ENCODE measurements at regions of chr4 and their contacts with region 1.

Region 1: DNA sequence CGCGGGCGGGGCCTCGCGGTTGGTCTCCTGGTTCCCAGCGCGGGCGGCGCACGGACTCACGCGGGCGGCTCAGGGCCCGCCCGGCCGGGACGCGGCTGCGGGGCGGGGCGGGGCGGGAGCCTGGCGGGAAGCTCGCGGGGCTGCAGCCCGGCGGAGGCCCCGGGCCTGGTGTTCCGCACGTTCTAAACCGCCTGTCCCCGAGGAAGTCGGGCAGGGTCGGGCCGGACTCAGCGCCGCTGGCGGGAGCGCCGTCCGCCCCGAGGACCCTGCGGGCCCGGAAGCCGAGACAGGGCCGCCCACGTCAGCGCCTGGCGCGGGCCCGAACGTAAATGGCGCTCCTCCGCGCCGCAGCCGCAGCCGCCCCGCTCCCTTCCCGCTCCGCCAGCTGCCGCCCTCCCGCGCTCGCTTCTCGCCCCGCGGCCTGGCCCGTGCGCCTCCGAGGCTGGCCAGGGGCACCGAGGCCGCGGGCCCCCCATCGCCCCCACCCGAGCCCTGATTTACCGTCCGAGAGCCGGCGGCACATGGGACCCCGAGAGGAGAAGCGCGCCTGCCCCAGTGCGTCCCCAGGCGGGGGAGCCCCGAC is 309 bp upstream of the CTBP1 start:
- DNase-seq: peak; percentile 90
- ATAC-seq: peak; percentile 63
- H3K4me3 Mint-ChIP-seq: peak overlapping the region; percentile 80
- H3K27ac Mint-ChIP-seq: peak overlapping the region; percentile 94
- H3K4me1 Mint-ChIP-seq: peaks cover 74% of the 10 kb centered on the region
- H3K27me3 Mint-ChIP-seq: no peaks in the 10 kb centered on the region

Region 2: GRCh38 chr4:931960-932712 is 317.1 kb before region 1 on chr4 and contains the starts of genes GAK and TMEM175:
- CTCF ChIA-PET with region 1: no interaction called
- POLR2A ChIA-PET with region 1: no interaction called
- intact Hi-C with region 1: loop called in 1 of 2 experiments (anchors 1 kb)
- DNase-seq: peak; percentile 98
- ATAC-seq: peak; percentile 95
- H3K4me3 Mint-ChIP-seq: peak within 1 kb of the TSS; percentile 87
- H3K27ac Mint-ChIP-seq: peak within 1 kb of the TSS; percentile 89
- H3K4me1 Mint-ChIP-seq: peaks cover 29% of the 10 kb centered on the region
- H3K27me3 Mint-ChIP-seq: no peaks in the 10 kb centered on the region
- total RNA-seq, gene GAK: 82.9 to 88.0 TPM
- total RNA-seq, gene TMEM175: 15.2 to 17.3 TPM

Region 3: GRCh38 chr4:973431-974397 is 275.5 kb before region 1 on chr4 and contains the start of gene DGKQ:
- CTCF ChIA-PET with region 1: no interaction called
- POLR2A ChIA-PET with region 1: no interaction called
- intact Hi-C with region 1: loop called in 1 of 2 experiments (anchors 1 kb)
- DNase-seq: peak; percentile 93
- ATAC-seq: peak; percentile 96
- H3K4me3 Mint-ChIP-seq: peak within 1 kb of the TSS; percentile 58
- H3K27ac Mint-ChIP-seq: no peak within 1 kb of the TSS
- H3K4me1 Mint-ChIP-seq: peaks cover 6% of the 10 kb centered on the region
- H3K27me3 Mint-ChIP-seq: no peaks in the 10 kb centered on the region
- total RNA-seq, gene DGKQ: 9.3 to 11.3 TPM

Region 4: GRCh38 chr4:1082215-1083182 is 166.7 kb before region 1 on chr4:
- CTCF ChIA-PET with region 1: no interaction called
- POLR2A ChIA-PET with region 1: no interaction called
- intact Hi-C with region 1: no loop called
- DNase-seq: no peak
- ATAC-seq: no peak
- H3K4me3 Mint-ChIP-seq: no peak overlapping the region
- H3K27ac Mint-ChIP-seq: no peak overlapping the region
- H3K4me1 Mint-ChIP-seq: peaks cover 11% of the 10 kb centered on the region
- H3K27me3 Mint-ChIP-seq: peaks cover 13% of the 10 kb centered on the region

Region 5: DNA sequence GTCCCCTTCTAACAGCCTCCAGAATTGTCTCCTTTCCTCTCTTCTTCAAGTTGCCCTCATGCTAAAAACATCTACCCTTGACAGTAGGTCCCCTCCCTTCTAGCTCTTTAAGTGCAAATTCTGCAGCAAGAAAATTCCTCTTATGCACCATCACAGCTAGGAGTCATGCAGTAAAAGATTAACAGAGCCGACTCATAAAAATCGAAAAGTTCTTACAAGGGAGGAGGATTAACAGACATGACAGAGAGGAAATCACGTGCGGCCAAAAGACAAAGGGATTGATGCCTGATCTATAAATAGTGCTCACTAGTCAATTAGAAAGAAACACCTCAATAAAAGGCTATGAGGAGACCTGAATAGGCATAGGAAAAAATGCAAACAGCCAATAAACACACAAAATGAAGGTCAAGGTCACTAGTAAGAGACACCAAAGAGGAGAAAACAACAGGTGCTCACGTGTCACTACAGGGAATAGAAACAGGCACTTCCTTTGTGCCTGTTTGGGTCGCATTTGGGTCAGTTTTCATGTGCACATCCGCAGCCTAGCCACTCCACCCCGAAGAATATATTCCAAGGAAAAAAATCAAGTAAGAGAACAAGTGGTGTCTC is 139.2 kb before region 1 on chr4:
- CTCF ChIA-PET with region 1: no interaction called
- POLR2A ChIA-PET with region 1: no interaction called
- intact Hi-C with region 1: no loop called
- DNase-seq: no peak
- ATAC-seq: no peak
- H3K4me3 Mint-ChIP-seq: no peak overlapping the region
- H3K27ac Mint-ChIP-seq: no peak overlapping the region
- H3K4me1 Mint-ChIP-seq: no peaks in the 10 kb centered on the region
- H3K27me3 Mint-ChIP-seq: peaks cover 12% of the 10 kb centered on the region

Region 6: DNA sequence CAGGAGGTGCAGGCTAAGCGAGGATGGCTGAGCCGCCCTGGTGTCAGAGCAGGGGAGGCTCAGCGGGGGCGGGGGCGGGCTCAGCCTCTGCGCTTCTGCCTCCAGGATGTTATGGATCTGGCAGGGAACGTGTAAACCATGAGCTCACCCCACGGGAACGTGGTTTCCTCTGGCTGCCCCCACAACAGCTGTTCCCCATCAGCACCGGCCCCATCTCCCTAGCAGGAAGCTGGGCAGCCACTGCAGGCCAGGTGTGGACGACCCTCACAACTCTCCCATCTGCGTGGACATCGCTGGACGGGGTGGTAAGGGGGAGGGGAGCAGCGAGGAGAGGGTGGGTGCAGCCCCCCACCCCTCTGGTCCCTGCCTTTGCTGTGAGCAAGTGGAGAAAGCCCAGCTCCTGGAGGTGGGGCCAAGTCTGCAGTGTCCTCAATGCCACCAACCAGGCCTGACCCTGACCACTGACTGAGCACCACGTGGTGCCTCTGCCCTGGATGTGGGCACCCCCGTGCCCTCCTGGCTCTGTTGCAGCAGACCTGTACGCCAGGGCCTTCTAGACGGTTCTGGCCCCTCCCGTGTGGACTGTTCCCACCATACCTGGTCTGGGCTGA is 48.7 kb before region 1 on chr4:
- CTCF ChIA-PET with region 1: no interaction called
- POLR2A ChIA-PET with region 1: no interaction called
- intact Hi-C with region 1: loop called (anchors 1 to 2 kb)
- DNase-seq: peak; percentile 51
- ATAC-seq: no peak
- H3K4me3 Mint-ChIP-seq: peak overlapping the region; percentile 74
- H3K27ac Mint-ChIP-seq: peak overlapping the region; percentile 73
- H3K4me1 Mint-ChIP-seq: peaks cover 40% of the 10 kb centered on the region
- H3K27me3 Mint-ChIP-seq: no peaks in the 10 kb centered on the region

Region 7: DNA sequence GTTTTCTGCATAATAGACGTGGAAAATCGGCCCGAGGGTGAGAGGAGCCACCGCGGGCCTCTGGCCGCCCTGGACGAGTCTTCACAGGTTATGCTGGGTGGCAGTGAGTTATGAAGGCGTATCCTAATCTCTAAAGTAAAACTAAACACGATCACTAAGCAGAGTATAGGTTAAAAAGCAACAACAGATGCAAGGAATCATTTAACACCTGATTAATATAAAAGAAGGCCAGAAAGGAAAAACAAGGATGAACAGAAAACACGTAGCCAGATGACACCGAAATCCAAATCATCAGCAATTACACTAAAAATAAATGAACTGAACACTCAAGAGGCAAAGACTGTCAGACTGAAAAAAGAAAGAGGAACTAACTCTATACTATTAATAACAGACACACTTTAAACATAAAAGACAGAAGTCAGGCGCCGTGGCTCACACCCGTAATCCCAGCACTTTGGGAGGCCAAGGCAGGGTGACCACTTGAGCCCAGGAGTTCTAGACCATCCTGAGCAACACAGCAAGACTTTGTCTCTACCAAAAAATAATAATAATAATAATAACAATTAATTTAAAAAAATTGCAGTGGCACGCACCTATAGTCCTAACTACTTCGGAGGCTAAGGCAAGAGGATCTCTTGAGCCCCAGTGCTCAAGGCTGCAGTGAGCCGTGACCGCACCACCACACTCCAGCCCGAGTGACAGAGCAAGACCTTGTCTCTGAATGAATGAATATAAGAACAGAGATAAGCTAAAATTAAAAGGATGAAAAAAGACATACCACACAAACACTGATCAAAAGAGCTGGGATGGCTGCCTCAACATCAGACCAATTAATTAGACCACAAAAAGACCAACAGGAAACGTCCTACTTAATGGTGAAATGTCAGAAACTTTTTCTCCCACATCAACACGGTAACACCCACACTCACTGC is 30.3 kb before region 1 on chr4:
- CTCF ChIA-PET with region 1: no interaction called
- POLR2A ChIA-PET with region 1: no interaction called
- intact Hi-C with region 1: no loop called
- DNase-seq: no peak
- ATAC-seq: no peak
- H3K4me3 Mint-ChIP-seq: no peak overlapping the region
- H3K27ac Mint-ChIP-seq: peak overlapping the region; percentile 26
- H3K4me1 Mint-ChIP-seq: peaks cover 33% of the 10 kb centered on the region
- H3K27me3 Mint-ChIP-seq: no peaks in the 10 kb centered on the region

Region 8: DNA sequence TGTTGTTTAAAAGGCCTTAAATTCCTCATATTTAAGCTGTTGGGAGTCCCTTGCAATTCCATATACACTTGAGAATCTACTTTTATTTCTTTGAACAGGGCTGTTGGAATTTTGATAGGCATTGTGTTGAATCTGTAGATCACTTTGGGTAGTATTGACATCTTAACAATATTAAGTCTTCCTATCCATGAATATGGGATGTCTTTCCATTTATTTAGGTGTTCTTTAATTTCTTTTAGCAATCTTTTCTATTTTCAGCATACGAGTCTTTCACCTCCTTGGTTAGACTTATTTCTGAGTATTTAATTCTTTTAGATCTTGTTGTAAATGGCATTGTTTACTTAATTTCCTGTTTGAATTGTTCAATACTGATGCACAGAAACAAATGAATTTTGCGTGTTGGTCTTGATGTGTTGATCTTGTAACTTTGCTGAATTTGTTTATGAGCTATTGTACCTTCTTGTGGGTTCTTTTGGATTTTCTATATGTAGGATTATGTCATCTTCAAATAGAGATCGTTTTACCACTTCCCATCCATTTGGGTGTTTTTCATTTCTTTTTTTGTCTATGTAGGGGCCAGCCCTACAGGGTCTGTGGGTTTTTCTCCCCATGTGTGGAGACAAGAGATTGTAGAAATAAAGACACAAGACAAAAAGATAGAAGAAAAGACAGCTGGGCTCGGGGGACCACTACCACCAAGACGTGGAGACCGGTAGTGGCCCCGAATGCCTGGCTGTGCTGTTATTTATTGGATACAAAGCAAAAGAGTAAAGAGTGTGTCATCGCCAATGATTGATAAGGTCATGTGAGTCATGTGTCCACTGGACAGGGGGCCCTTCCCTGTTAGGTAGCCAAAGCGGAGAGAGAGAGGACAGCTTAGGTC is 17.9 kb after region 1 on chr4:
- CTCF ChIA-PET with region 1: interaction called, 17 read pairs
- POLR2A ChIA-PET with region 1: interaction called, 3 read pairs
- intact Hi-C with region 1: loop called (anchors 1 to 2 kb)
- DNase-seq: peak; percentile 29
- ATAC-seq: peak; percentile 71
- H3K4me3 Mint-ChIP-seq: peak overlapping the region; percentile 63
- H3K27ac Mint-ChIP-seq: peak overlapping the region; percentile 90
- H3K4me1 Mint-ChIP-seq: peaks cover 13% of the 10 kb centered on the region
- H3K27me3 Mint-ChIP-seq: no peaks in the 10 kb centered on the region

Region 9: DNA sequence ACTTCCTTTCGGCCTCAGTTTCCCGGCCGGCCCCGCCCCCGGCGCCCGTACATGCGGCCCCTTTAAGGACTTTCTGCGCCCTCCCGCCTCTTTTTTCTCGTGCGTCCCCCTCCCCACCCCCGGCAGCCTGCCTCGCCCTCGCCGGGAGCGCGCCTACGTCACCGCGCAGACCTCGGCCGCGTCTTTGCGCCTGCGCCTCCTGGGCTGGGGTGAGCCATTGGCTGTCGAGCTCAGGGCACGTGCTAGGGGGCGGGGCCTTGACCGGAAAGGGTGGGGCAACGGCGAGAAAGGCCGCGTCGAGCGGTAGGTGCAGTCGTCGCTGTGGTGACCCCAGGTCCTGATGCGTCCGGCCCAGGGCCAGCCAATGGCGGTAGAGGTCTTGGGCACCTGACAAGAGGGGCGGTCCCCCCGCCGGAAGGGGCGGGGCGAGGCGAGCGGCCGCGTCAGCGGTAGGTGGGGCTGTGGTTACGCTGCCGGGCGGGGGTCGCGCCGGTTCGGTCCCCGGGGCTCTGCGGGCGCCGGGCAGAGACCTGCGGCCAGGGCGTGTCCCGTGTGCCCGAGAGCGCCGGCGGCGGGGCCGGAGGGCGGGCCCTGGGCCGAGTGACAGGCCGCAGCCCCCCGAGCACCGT is 97.7 kb after region 1 on chr4 and contains the start of gene UVSSA:
- CTCF ChIA-PET with region 1: interaction called, 5 read pairs
- POLR2A ChIA-PET with region 1: interaction called, 5 read pairs
- intact Hi-C with region 1: loop called (anchors 1 kb)
- DNase-seq: peak; percentile 100
- ATAC-seq: peak; percentile 95
- H3K4me3 Mint-ChIP-seq: peak within 1 kb of the TSS; percentile 86
- H3K27ac Mint-ChIP-seq: peak within 1 kb of the TSS; percentile 87
- H3K4me1 Mint-ChIP-seq: peaks cover 47% of the 10 kb centered on the region
- H3K27me3 Mint-ChIP-seq: no peaks in the 10 kb centered on the region
- total RNA-seq, gene UVSSA: 14.8 to 18.1 TPM

Region 10: DNA sequence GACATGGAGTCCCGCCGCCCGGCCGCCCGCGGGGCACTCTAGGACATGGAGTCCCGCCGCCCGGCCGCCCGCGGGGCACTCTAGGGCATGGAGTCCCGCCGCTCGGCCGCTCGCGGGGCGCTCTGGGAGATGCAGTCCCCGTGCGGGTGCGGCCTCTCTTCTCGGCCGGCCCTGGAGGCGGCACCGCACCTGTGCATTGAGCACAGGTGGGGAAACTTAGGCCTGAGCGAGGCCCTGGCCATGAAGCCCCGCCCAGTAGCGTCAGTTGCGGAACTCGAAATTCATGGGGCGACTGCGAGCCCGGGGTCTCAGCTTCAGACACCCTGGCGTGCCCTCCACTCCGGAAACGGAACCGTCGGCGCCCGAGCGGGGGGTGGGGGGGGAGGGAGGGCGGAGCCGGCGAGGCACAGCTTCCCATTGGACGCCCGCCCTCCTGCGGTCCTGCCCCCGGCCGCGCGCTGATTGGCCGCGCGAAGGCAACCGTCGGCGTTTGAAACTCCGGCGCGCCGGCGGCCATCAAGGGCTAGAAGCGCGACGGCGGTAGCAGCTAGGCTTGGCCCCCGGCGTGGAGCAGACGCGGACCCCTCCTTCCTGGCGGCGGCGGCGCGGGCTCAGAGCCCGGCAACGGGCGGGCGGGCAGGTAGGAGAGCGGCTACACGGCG is 471.9 kb after region 1 on chr4 and contains the starts of genes TACC3 and TMEM129:
- CTCF ChIA-PET with region 1: no interaction called
- POLR2A ChIA-PET with region 1: no interaction called
- intact Hi-C with region 1: loop called in 1 of 2 experiments (anchors 1 kb)
- DNase-seq: peak; percentile 96
- ATAC-seq: peak; percentile 81
- H3K4me3 Mint-ChIP-seq: peak within 1 kb of the TSS; percentile 96
- H3K27ac Mint-ChIP-seq: peak within 1 kb of the TSS; percentile 99
- H3K4me1 Mint-ChIP-seq: peaks cover 52% of the 10 kb centered on the region
- H3K27me3 Mint-ChIP-seq: no peaks in the 10 kb centered on the region
- total RNA-seq, gene TACC3: 197 to 206 TPM
- total RNA-seq, gene TMEM129: 13.7 to 14.6 TPM